ENCODE measurements at regions of chr19 and their contacts with region 1.

Region 1: DNA sequence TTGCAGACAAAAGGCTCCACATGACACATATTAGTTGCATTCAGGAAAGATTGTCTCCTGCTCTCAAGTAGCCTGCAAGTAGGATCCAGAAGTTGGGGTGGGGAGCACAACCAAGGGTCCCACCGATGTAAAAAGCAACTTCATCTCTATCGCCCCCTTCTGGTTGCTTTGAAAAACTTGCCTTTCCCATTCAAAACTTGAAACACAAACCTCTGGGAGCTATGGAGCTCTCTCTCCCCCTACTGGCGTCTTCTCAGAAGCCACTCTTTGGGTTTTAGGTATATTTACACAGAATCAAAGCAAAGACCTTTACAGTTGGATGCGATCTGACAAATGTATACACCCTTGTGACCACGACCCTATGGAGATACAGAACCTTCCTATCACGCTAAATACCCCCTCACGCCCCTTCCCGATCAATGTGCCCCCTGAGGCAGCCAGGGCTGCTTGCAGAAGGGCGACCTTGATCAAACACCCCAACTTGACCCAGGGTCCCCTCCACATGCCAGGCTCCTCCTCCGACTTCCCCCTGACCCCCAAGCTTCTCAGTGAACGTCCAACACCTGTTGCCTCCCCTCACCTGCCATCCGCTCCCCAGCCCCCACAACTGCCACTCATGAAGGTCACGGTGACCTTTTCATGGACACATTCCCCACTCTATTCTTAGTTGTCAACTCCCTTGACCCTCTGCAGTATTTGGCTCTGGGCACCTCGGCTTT is 10.1 kb downstream of the NOSIP start:
- DNase-seq: no peak
- ATAC-seq: peak; percentile 93
- H3K4me3 Mint-ChIP-seq: peak overlapping the region; percentile 41
- H3K27ac Mint-ChIP-seq: peak overlapping the region; percentile 53
- H3K4me1 Mint-ChIP-seq: peaks cover 30% of the 10 kb centered on the region
- H3K27me3 Mint-ChIP-seq: no peaks in the 10 kb centered on the region
- CTCF ChIP-seq: peak; percentile 98

Region 2: DNA sequence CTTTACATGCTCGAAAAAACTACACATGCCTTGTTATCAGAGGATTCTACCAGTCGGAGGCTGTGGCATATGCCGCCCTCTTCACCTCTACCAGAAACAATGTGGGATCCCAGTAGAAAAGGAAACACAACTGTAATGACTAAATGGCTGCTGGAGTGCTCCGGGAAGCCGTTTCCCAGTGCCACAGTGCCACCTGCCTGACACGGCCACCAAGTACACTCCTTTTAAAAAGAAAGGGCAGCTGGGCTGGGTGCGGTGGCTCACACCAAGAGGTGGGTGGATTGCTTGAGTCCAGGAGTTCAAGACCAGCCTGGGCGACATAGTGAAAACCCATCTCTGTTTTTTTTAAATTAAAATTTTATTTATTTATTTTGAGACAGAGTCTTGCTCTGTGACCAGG is 345.4 kb before region 1 on chr19:
- CTCF ChIA-PET with region 1: interaction called, 6 read pairs
- POLR2A ChIA-PET with region 1: no interaction called
- intact Hi-C with region 1: loop called (anchors 1 kb)
- DNase-seq: no peak
- ATAC-seq: peak; percentile 54
- H3K4me3 Mint-ChIP-seq: no peak overlapping the region
- H3K27ac Mint-ChIP-seq: no peak overlapping the region
- H3K4me1 Mint-ChIP-seq: peaks cover 6% of the 10 kb centered on the region
- H3K27me3 Mint-ChIP-seq: peaks cover 6% of the 10 kb centered on the region
- CTCF ChIP-seq: no peak

Region 3: GRCh38 chr19:49473868-49474544 is 96.3 kb before region 1 on chr19 and contains the start of gene FLT3LG:
- CTCF ChIA-PET with region 1: interaction called, 4 read pairs
- POLR2A ChIA-PET with region 1: no interaction called
- intact Hi-C with region 1: loop called (anchors 1 kb)
- DNase-seq: peak; percentile 92
- ATAC-seq: peak; percentile 45
- H3K4me3 Mint-ChIP-seq: peak within 1 kb of the TSS; percentile 92
- H3K27ac Mint-ChIP-seq: peak within 1 kb of the TSS; percentile 91
- H3K4me1 Mint-ChIP-seq: peaks cover 67% of the 10 kb centered on the region
- H3K27me3 Mint-ChIP-seq: no peaks in the 10 kb centered on the region
- CTCF ChIP-seq: peak; percentile 52
- total RNA-seq, gene FLT3LG: 15.4 and 17.7 TPM in 2 replicates

Region 4: GRCh38 chr19:49502866-49503581 is 67.3 kb before region 1 on chr19:
- CTCF ChIA-PET with region 1: interaction called, 20 read pairs
- POLR2A ChIA-PET with region 1: interaction called, 3 read pairs
- intact Hi-C with region 1: loop called (anchors 1 kb)
- DNase-seq: no peak
- ATAC-seq: no peak
- H3K4me3 Mint-ChIP-seq: no peak overlapping the region
- H3K27ac Mint-ChIP-seq: peak overlapping the region; percentile 83
- H3K4me1 Mint-ChIP-seq: peaks cover 53% of the 10 kb centered on the region
- H3K27me3 Mint-ChIP-seq: no peaks in the 10 kb centered on the region
- CTCF ChIP-seq: no peak

Region 5: GRCh38 chr19:49546825-49547565 is 23.3 kb before region 1 on chr19:
- CTCF ChIA-PET with region 1: interaction called, 14 read pairs
- POLR2A ChIA-PET with region 1: no interaction called
- intact Hi-C with region 1: loop called (anchors 2 kb)
- DNase-seq: no peak
- ATAC-seq: peak; percentile 76
- H3K4me3 Mint-ChIP-seq: peak overlapping the region; percentile 47
- H3K27ac Mint-ChIP-seq: no peak overlapping the region
- H3K4me1 Mint-ChIP-seq: peaks cover 8% of the 10 kb centered on the region
- H3K27me3 Mint-ChIP-seq: no peaks in the 10 kb centered on the region
- CTCF ChIP-seq: peak; percentile 52

Region 6: GRCh38 chr19:49580264-49581006 is 10.1 kb after region 1 on chr19 and contains the start of gene NOSIP:
- CTCF ChIA-PET with region 1: interaction called, 18 read pairs
- POLR2A ChIA-PET with region 1: interaction called, 9 read pairs
- intact Hi-C with region 1: no loop called
- DNase-seq: peak; percentile 87
- ATAC-seq: peak; percentile 98
- H3K4me3 Mint-ChIP-seq: peak within 1 kb of the TSS; percentile 92
- H3K27ac Mint-ChIP-seq: peak within 1 kb of the TSS; percentile 84
- H3K4me1 Mint-ChIP-seq: peaks cover 24% of the 10 kb centered on the region
- H3K27me3 Mint-ChIP-seq: no peaks in the 10 kb centered on the region
- CTCF ChIP-seq: no peak
- total RNA-seq, gene NOSIP: 49.9 and 54.8 TPM in 2 replicates